Right cardiac atrium (tissue), 5 donors: ENCODE measurements at regions of chr11 and their contacts with region 1.

Region 1: DNA sequence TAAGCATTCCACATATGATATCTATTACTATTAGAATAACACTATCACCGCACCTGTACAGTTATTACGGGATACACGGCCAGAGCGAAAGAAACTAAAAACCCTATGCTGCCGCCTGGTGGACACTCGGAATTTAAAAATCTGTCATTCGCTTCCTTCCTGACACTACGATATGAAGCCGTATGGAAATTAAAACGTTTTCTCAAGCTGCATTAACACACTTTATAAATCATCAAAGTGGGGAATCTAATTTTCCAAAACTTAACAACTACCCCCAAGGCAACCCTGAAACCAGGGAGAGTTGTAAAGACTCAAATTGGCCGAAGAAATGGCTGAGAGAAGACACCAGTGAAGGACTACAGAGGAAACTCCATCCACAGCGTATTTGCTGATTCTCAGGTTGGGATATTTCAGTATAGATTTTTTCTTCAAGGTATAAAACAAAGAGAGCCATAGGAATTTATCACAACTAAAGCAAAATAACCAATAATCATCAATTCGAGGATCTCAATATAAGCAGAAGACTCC is 1.4 kb downstream of the CCDC73 start:
- DNase-seq: peak; percentile 23 to 68 (median 56)
- ATAC-seq: peak; percentile 61 to 74
- H3K4me3 ChIP-seq: peak overlapping the region; percentile 5
- H3K27ac ChIP-seq: no peak overlapping the region
- H3K4me1 ChIP-seq: no peaks in the 10 kb centered on the region
- H3K27me3 ChIP-seq: no peaks in the 10 kb centered on the region

Region 2: DNA sequence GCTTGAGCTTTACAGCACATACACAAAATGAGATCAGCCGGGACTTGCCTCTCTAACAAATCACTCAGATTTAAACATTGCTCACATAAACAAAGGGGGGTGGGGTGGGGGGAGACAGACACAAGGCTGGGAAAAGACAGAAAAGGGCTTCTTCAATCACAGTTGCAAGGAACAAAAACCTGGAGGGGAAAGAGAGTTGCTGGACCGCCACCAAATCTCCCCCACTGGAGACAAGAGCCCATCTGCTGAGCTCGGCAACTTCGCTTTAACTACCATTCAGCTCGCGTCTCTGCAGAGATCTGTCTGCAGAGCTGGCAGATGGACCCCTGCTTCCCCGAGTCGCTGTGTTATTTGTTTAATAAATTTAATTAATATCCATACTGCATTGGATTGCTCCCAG is 537.2 kb before region 1 on chr11:
- intact Hi-C with region 1: no loop called
- DNase-seq: no peak
- ATAC-seq: no peak
- H3K4me3 ChIP-seq: no peak overlapping the region
- H3K27ac ChIP-seq: no peak overlapping the region
- H3K4me1 ChIP-seq: no peaks in the 10 kb centered on the region
- H3K27me3 ChIP-seq: no peaks in the 10 kb centered on the region

Region 3: GRCh38 chr11:32316858-32317642 is 476.0 kb before region 1 on chr11:
- intact Hi-C with region 1: loop called (anchors 5 to 10 kb)
- DNase-seq: no peak
- ATAC-seq: no peak
- H3K4me3 ChIP-seq: no peak overlapping the region
- H3K27ac ChIP-seq: no peak overlapping the region
- H3K4me1 ChIP-seq: no peaks in the 10 kb centered on the region
- H3K27me3 ChIP-seq: no peaks in the 10 kb centered on the region

Region 4: GRCh38 chr11:32326522-32326921 is 466.5 kb before region 1 on chr11:
- intact Hi-C with region 1: loop called in 3 of 4 experiments (anchors 5 to 10 kb)
- DNase-seq: no peak
- ATAC-seq: no peak
- H3K4me3 ChIP-seq: no peak overlapping the region
- H3K27ac ChIP-seq: no peak overlapping the region
- H3K4me1 ChIP-seq: no peaks in the 10 kb centered on the region
- H3K27me3 ChIP-seq: no peaks in the 10 kb centered on the region